Thyroid gland (tissue), 4 donors: ENCODE measurements at regions of chr15 and their contacts with region 1.

Region 1: GRCh38 chr15:90387537-90388461 is at the start of gene IQGAP1:
- DNase-seq: peak; percentile 98
- H3K4me3 ChIP-seq: peak within 1 kb of the TSS; percentile 41 to 94 (median 86)
- H3K27ac ChIP-seq: peak within 1 kb of the TSS; percentile 95 to 98 (median 96)
- H3K4me1 ChIP-seq: peaks cover 11 to 37% of the 10 kb centered on the region in 2 donors
- H3K27me3 ChIP-seq: no peaks in the 10 kb centered on the region
- CTCF ChIP-seq: no peak
- POLR2A ChIP-seq: peak; percentile 59 to 90
- total RNA-seq, gene IQGAP1: 222 to 290 (median 247) TPM

Region 2: GRCh38 chr15:90086868-90087268 is 300.9 kb before region 1 on chr15:
- intact Hi-C with region 1: no loop called
- DNase-seq: peak; percentile 37 to 50
- H3K4me3 ChIP-seq: no peak overlapping the region
- H3K27ac ChIP-seq: no peak overlapping the region
- H3K4me1 ChIP-seq: no peaks in the 10 kb centered on the region
- H3K27me3 ChIP-seq: no peaks in the 10 kb centered on the region
- CTCF ChIP-seq: peak; percentile 6 to 67 (median 52)
- POLR2A ChIP-seq: no peak

Region 3: DNA sequence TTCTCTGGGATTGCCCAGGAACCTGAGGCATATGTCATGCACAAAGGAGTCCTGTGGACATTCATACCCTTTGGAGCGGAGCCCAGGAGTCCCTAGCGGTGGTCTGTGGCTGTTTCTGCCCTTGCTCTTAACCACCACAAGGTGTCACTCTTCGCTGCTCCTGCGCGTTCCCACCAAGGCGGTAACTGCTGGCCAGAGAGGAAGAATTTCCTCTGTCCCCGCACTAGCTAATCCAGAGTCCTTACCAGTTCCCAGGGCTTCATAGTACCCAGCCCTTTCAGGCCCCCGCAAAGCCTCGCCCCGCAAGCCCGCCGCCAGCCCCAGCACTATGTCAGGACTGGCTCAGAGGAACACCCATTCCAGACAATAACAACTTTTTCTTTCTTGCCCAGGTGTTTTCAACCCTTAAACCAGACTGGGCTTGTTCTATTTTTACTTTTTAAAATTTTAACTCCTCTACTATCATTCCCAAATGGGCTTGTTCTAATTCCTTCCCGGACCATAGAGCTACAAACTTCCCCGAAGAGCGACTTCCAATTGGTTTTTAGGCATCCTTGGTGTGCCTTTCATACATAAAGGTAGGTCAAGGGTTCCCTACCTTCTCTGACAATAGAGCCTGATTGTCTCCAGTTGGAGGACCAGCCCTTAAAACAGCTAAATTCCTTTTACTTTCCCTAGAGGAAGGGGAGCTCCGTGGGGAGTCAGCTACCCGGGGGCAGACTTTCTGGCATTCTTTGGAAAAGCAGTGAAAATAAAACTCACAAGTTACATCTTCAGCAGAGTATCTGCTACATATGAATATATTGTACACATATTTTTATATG is 67.5 kb before region 1 on chr15:
- intact Hi-C with region 1: loop called (anchors 10 kb)
- DNase-seq: peak; percentile 86
- H3K4me3 ChIP-seq: no peak overlapping the region
- H3K27ac ChIP-seq: peak overlapping the region in 2 of 3 donors; percentile 30 to 33
- H3K4me1 ChIP-seq: peaks cover 13 to 18% of the 10 kb centered on the region in 2 donors
- H3K27me3 ChIP-seq: no peaks in the 10 kb centered on the region
- CTCF ChIP-seq: peak; percentile 96 to 100 (median 98)
- POLR2A ChIP-seq: no peak

Region 4: DNA sequence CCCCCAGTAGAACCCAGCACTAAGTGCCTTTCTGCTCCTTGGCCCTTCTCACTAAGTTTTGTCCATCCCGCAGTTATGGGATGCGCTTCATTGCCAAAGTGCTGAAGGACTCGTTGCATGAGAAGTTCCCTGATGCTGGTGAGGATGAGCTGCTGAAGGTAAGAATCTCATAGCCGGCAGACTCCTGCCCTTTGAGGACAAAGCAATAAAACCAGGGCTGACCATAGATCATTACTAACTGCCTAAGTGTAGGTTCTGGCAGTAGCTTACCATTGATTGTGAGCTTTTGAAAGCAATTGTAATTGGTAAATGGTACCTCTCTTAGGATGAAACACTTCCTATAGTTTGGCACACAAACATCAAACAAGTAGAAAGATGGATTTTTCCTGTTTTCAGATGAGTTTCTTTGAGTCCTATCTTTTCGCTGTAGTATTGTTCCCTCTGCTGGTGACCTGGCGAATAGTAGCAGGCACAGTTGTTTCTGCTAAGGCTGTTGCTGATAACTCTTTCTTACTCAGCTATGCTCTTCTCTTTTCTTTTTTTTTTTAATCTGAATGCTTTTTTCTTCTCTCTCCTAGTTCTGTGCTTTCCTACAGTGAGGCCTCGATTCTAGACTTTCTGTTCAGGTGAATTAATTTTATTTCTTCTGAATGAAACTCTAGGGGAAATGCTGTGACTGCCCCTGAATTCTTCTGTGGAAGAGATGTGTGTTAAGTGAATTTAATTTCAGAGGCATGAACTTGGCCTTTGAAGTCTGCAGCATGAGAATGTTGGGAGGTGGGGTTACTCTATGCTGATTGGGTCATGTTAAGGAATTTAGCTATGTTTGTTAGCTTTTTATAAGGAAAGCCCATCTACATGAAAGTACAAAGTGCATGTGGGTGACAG is 94.6 kb after region 1 on chr15:
- intact Hi-C with region 1: loop called (anchors 10 kb)
- DNase-seq: peak; percentile 39 to 59
- H3K4me3 ChIP-seq: no peak overlapping the region
- H3K27ac ChIP-seq: peak overlapping the region in 1 of 3 donors; percentile 5
- H3K4me1 ChIP-seq: peaks cover 5 to 18% of the 10 kb centered on the region in 2 donors
- H3K27me3 ChIP-seq: no peaks in the 10 kb centered on the region
- CTCF ChIP-seq: peak; percentile 31 to 96 (median 71)
- POLR2A ChIP-seq: no peak